CD4-positive, alpha-beta T cell (primary cell): ENCODE measurements at regions of chr16 and their contacts with region 1.

Region 1: DNA sequence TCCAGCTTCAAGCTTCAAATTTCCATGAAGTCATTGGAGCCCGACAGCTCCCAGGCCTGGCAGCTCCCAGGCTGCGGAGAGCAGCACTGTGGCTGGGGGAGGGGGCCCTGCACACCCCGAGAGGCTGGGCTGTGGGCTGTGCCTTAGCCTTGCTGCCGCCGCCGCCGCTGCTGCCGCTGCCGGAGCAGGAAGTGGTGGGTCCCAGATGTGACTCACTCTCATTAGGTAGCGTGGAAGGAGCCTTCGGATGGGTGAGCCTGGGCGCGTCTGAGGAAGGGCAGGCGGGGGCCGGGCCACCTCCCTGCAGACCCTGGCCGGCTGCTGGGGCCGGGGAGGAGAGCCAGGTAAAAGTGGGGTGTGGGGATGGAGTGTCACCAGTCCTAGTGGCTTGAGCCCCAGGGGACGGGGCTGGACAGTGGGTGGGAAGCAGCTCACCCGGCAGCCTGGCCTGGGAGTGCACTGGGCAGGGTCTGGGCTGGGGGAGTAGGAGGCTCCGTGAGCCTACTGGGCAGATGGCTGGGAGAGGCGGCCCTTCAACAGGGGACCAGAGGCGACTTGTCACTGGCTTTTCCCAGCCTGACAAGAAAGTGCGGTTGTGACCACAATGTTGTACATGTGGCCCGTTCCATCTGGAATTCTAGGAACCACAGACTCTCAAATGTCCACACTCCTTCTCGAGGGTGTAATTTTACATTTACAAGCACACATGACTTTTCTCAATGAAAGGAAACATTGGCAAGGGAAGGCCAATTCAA is at the start of gene ADCY7:
- DNase-seq: peak; percentile 66 to 90 (median 86)
- ATAC-seq: peak; percentile 91
- H3K4me3 ChIP-seq: peak within 1 kb of the TSS; percentile 98
- H3K4me3 Mint-ChIP-seq: peak within 1 kb of the TSS; percentile 99
- H3K27ac ChIP-seq: peak within 1 kb of the TSS; percentile 87 to 97
- H3K27ac Mint-ChIP-seq: peak within 1 kb of the TSS; percentile 100
- H3K4me1 ChIP-seq: peaks cover 65% of the 10 kb centered on the region
- H3K4me1 Mint-ChIP-seq: peaks cover 73% of the 10 kb centered on the region
- H3K27me3 ChIP-seq: no peaks in the 10 kb centered on the region
- H3K27me3 Mint-ChIP-seq: no peaks in the 10 kb centered on the region
- CTCF ChIP-seq: no peak
- total RNA-seq, gene ADCY7: 136 to 147 TPM

Region 2: DNA sequence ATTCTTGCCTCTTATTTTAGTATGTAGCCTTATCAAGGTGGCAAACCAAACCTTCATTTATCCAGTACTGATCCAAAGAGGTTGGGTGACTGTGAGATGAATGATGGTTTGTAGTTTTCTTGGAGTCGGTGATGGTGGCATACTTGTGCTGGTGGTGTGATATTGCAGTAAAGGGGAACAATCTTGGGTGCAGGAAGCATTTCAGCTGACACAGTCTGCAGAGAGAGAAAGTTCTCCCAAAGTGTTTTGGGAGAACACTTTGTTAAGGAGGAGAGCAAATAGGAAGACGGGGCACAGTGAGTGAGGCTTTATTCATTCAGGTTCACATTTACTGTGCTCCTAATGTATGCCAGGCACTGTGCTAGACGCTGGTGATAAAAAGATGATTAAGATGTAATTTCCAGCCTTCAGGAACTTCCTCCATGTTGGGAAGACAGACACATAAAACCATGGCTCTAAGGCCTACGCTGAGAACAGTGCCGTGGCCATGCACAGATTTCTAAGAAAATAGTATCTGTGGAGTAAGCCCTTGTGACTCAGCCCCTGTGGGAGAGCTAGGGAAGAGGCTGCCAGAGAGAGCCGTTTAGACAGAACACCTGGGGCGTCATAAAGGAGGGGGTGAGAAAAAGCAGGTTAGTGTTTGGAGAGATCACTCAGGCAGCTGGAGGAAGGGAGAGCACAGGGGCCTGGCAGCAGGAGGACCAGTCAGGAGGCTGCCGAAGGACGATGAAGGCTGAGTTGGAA is 186.9 kb before region 1 on chr16:
- CTCF ChIA-PET with region 1: no interaction called
- POLR2A ChIA-PET with region 1: no interaction called
- intact Hi-C with region 1: no loop called
- DNase-seq: no peak
- ATAC-seq: no peak
- H3K4me3 ChIP-seq: no peak overlapping the region
- H3K4me3 Mint-ChIP-seq: no peak overlapping the region
- H3K27ac ChIP-seq: no peak overlapping the region
- H3K27ac Mint-ChIP-seq: no peak overlapping the region
- H3K4me1 ChIP-seq: no peaks in the 10 kb centered on the region
- H3K4me1 Mint-ChIP-seq: peaks cover 17% of the 10 kb centered on the region
- H3K27me3 ChIP-seq: no peaks in the 10 kb centered on the region
- H3K27me3 Mint-ChIP-seq: no peaks in the 10 kb centered on the region
- CTCF ChIP-seq: no peak

Region 3: DNA sequence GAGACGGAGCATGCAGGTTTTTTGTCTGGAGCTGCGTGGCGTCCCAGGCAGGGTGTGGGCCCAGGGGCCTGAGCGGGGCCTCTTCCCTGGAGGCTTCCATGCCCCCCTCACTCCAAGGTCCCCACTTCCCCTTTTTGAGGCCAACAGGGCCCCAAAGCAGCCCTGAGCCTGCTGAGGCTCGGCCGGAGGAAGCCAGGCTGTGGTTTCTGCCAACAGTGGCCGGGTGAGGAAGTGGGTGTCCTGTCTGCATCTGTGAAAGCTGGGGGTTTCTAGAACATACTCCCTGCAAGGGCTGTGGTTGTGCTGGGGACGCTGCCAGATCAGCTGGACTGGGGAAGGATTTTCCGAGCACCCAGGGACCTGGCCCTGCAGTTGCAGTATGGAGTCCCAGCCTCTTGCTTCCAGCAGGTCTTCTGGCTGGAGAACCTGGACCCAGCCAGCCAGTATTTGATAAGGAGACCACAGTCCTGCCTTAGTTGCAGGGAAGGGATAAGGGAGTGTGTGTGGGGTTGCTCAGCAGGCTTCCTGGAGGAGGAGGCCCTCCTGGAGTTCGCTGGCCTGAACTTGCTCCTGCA is 15.5 kb after region 1 on chr16:
- CTCF ChIA-PET with region 1: interaction called, 6 read pairs
- POLR2A ChIA-PET with region 1: interaction called, 77 read pairs
- intact Hi-C with region 1: loop called in 1 of 2 experiments (anchors 2 kb)
- DNase-seq: peak in 13 of 14 experiments; percentile 32 to 87 (median 56)
- ATAC-seq: peak; percentile 61
- H3K4me3 ChIP-seq: peak overlapping the region; percentile 47
- H3K4me3 Mint-ChIP-seq: peak overlapping the region; percentile 81
- H3K27ac ChIP-seq: peak overlapping the region; percentile 40 to 65
- H3K27ac Mint-ChIP-seq: peak overlapping the region; percentile 100
- H3K4me1 ChIP-seq: peaks cover 86% of the 10 kb centered on the region
- H3K4me1 Mint-ChIP-seq: peaks cover 93% of the 10 kb centered on the region
- H3K27me3 ChIP-seq: no peaks in the 10 kb centered on the region
- H3K27me3 Mint-ChIP-seq: no peaks in the 10 kb centered on the region
- CTCF ChIP-seq: no peak

Region 4: GRCh38 chr16:50313596-50314478 is 47.3 kb after region 1 on chr16:
- CTCF ChIA-PET with region 1: interaction called, 6 read pairs
- POLR2A ChIA-PET with region 1: interaction called, 4 read pairs
- intact Hi-C with region 1: loop called in 1 of 2 experiments (anchors 10 kb)
- DNase-seq: peak in 13 of 14 experiments; percentile 22 to 80 (median 60)
- ATAC-seq: peak; percentile 82
- H3K4me3 ChIP-seq: no peak overlapping the region
- H3K4me3 Mint-ChIP-seq: peak overlapping the region; percentile 57
- H3K27ac ChIP-seq: peak overlapping the region; percentile 17 to 52
- H3K27ac Mint-ChIP-seq: peak overlapping the region; percentile 91
- H3K4me1 ChIP-seq: peaks cover 45% of the 10 kb centered on the region
- H3K4me1 Mint-ChIP-seq: peaks cover 33% of the 10 kb centered on the region
- H3K27me3 ChIP-seq: no peaks in the 10 kb centered on the region
- H3K27me3 Mint-ChIP-seq: no peaks in the 10 kb centered on the region
- CTCF ChIP-seq: no peak

Region 5: DNA sequence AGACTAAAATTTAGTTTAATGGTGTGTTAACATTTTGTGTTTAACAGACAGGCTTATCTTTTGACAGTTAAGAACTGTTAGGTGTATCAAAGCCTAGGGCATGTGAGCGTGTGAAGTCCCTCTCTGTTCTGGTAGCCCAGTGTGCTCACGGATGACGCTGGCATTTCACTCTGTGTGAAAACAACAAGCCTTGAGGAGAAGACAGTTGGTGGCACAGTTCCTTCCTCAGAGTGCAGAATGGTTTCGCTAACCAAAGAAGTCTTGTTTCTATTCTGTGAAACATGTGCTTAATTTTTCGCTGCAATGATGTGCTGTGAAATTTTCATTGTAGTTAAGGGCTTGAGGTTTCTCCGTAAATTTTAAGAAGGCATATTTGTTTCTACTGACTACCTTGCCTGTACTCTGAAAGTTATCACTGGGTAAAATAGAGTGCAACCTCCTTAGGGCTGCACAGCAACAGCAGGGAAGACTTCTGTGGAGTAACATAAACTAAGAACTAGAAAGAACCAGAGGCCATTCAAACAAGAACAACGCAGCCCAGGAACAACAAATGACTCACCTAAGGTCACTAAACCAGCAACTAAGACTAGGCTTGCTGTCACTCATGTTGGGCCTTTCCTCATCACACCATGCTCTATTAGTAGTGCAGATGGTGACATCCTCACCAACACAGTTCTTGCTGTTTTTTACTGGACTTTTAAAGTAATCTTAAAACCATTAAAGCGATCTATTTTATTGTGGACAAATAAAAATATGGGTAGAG is 68.9 kb after region 1 on chr16:
- CTCF ChIA-PET with region 1: no interaction called
- POLR2A ChIA-PET with region 1: interaction called, 3 read pairs
- intact Hi-C with region 1: loop called in 1 of 2 experiments (anchors 5 kb)
- DNase-seq: peak in 10 of 14 experiments; percentile 37 to 90 (median 50)
- ATAC-seq: peak; percentile 73
- H3K4me3 ChIP-seq: no peak overlapping the region
- H3K4me3 Mint-ChIP-seq: peak overlapping the region; percentile 80
- H3K27ac ChIP-seq: peak overlapping the region in 1 of 2 donors; percentile 25
- H3K27ac Mint-ChIP-seq: peak overlapping the region; percentile 98
- H3K4me1 ChIP-seq: peaks cover 41% of the 10 kb centered on the region
- H3K4me1 Mint-ChIP-seq: peaks cover 68% of the 10 kb centered on the region
- H3K27me3 ChIP-seq: no peaks in the 10 kb centered on the region
- H3K27me3 Mint-ChIP-seq: no peaks in the 10 kb centered on the region
- CTCF ChIP-seq: no peak

Region 6: DNA sequence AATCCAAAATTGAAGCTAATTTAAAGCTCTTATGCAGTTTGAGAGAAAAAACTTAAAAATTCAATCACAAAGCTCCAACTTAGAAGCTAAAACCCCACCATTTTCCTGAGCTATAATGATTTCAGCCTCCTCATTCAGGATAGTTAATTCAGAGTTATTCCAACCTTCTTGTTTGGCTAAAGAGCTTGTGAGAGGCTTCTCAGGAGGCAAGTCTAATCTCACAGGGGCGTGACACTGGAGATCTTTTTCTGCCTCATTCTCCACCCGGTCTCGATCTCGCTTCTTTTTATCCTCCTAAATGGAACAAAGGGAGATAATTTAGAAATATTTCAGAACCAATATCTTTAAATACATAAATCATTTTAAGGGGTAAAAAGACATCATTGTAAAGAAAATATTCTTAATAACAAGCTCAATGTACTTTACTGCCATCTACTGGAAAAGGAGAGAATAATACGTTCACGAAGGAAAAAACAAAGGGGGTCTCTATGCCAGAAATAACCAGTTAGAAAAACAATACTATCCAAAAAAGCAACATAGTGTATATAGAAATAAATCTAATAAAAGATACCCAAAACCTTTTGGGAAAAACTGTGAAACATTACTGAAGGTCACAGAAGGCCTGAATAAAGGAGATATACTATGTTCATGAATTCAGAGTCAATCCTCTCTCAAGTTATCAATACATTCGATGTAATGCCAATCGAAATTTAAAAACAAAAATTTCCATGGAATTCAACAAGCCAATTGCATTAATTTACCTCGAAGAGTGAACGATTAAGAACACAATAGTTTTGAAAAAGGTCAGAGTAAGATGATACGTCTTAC is 88.3 kb after region 1 on chr16:
- CTCF ChIA-PET with region 1: no interaction called
- POLR2A ChIA-PET with region 1: interaction called, 6 read pairs
- intact Hi-C with region 1: loop called (anchors 2 to 5 kb)
- DNase-seq: peak in 3 of 14 experiments; percentile 49 to 51 (median 50)
- ATAC-seq: peak; percentile 55
- H3K4me3 ChIP-seq: no peak overlapping the region
- H3K4me3 Mint-ChIP-seq: no peak overlapping the region
- H3K27ac ChIP-seq: no peak overlapping the region
- H3K27ac Mint-ChIP-seq: peak overlapping the region; percentile 80
- H3K4me1 ChIP-seq: peaks cover 3% of the 10 kb centered on the region
- H3K4me1 Mint-ChIP-seq: peaks cover 52% of the 10 kb centered on the region
- H3K27me3 ChIP-seq: no peaks in the 10 kb centered on the region
- H3K27me3 Mint-ChIP-seq: no peaks in the 10 kb centered on the region
- CTCF ChIP-seq: peak; percentile 95

Region 7: DNA sequence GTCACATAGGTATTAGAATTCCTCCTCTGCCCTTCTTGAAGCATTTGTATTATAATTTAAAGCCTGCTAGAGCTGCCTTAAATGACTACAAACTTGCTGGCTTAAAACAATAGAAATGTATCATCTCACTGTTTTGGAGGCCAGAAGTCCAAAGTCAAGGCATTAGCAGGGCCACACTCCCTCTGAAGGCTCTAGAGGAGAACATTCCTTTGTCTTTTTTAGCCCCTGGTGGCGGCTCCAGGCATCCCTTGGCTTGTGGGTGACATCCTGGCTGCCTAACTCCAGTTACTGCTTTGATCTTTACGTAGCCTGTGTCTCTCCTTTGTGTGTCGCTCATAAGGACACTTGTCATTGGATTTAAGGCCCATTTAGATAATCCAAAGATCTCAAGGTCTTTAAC is 1071.1 kb after region 1 on chr16:
- CTCF ChIA-PET with region 1: no interaction called
- POLR2A ChIA-PET with region 1: no interaction called
- intact Hi-C with region 1: no loop called
- DNase-seq: no peak
- ATAC-seq: no peak
- H3K4me3 ChIP-seq: no peak overlapping the region
- H3K4me3 Mint-ChIP-seq: no peak overlapping the region
- H3K27ac ChIP-seq: no peak overlapping the region
- H3K27ac Mint-ChIP-seq: no peak overlapping the region
- H3K4me1 ChIP-seq: no peaks in the 10 kb centered on the region
- H3K4me1 Mint-ChIP-seq: no peaks in the 10 kb centered on the region
- H3K27me3 ChIP-seq: no peaks in the 10 kb centered on the region
- H3K27me3 Mint-ChIP-seq: no peaks in the 10 kb centered on the region
- CTCF ChIP-seq: no peak